AG04450 (cell line): ENCODE measurements at regions of chr3 and their contacts with region 1.

Region 1: DNA sequence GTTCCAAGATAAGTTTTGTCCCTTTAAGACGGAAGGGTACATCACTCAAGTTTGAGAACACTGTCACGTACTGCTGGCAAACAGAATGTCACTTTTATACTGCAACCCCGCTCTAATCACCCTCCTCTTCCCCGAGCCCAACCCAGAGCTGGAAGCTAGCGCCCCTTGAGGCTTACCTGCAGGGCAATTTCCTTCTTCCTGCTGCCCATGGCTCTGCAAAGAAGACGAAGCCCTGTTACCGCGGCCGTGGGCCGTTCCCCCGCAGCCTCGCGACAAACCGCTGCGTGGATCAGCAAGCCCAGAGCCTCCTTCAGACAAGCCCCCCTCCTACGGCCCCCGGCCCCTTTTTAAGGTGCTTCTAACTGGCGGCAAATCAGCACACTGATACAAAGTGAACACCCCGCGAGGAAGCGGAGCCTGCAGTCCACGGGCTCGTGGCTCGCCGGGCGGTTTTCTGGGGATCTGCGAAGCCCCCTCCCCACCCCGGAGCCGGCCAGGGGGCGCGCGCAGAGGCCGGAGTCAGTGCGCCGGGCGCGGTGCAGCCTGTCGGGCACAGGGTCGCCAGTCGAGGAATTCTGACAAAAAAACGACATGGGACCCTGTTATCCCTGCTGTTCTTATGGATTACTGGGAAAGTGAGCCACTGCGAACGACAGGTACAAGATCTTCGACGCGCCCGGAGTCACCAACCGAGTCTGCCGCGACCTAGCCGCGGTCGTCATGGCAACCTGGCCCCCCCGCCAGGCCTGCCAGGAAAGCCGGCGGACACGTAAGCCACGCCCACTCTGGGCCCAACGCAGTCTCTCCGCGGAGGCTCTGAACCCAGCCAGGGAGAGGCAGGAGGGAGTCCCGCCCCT is at the start of gene NME9:
- DNase-seq: peak; percentile 55
- H3K4me3 ChIP-seq: peak within 1 kb of the TSS; percentile 68
- H3K27ac ChIP-seq: no peak within 1 kb of the TSS
- H3K27me3 ChIP-seq: peaks cover 5% of the 10 kb centered on the region
- CTCF ChIP-seq: peak; percentile 79
- polyA plus RNA-seq, gene NME9: 0.19 TPM in 1 of 2 replicates, not detected in the other

Region 2: DNA sequence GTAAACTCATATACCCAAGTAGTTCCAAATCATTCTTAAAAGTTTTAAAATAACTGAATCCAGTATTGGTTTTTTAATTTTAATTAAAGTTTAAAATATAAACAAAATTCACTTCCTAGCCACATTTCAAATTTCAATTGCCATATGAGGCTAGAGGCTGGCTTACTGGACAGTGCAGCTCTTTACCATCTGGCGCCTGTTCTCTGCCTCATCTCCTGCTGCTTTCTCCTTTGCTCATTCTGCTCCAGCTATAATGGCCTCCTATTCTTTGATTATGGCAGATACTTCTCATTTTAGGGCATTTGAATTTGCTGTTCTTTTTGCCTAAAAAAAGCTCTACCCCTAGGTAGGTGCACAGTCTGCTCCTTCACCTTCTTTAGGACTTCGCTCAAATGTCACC is 123.2 kb before region 1 on chr3:
- CTCF ChIA-PET with region 1: no interaction called
- POLR2A ChIA-PET with region 1: no interaction called
- DNase-seq: no peak
- H3K4me3 ChIP-seq: no peak overlapping the region
- H3K27ac ChIP-seq: no peak overlapping the region
- H3K27me3 ChIP-seq: no peaks in the 10 kb centered on the region
- CTCF ChIP-seq: no peak

Region 3: GRCh38 chr3:138347960-138348753 is 18.8 kb after region 1 on chr3 and contains the start of gene MRAS:
- CTCF ChIA-PET with region 1: interaction called, 36 read pairs
- POLR2A ChIA-PET with region 1: no interaction called
- DNase-seq: peak; percentile 43
- H3K4me3 ChIP-seq: peak within 1 kb of the TSS; percentile 82
- H3K27ac ChIP-seq: peak within 1 kb of the TSS; percentile 70
- H3K27me3 ChIP-seq: no peaks in the 10 kb centered on the region
- CTCF ChIP-seq: peak; percentile 47
- polyA plus RNA-seq, gene MRAS: 58.3 and 59.1 TPM in 2 replicates

Region 4: GRCh38 chr3:138426226-138426625 is 96.9 kb after region 1 on chr3:
- CTCF ChIA-PET with region 1: interaction called, 23 read pairs
- POLR2A ChIA-PET with region 1: no interaction called
- DNase-seq: no peak
- H3K4me3 ChIP-seq: no peak overlapping the region
- H3K27ac ChIP-seq: no peak overlapping the region
- H3K27me3 ChIP-seq: peaks cover 6% of the 10 kb centered on the region
- CTCF ChIP-seq: peak; percentile 67

Region 5: GRCh38 chr3:138442433-138442832 is 113.1 kb after region 1 on chr3:
- CTCF ChIA-PET with region 1: no interaction called
- POLR2A ChIA-PET with region 1: no interaction called
- DNase-seq: no peak
- H3K4me3 ChIP-seq: no peak overlapping the region
- H3K27ac ChIP-seq: no peak overlapping the region
- H3K27me3 ChIP-seq: peaks cover 19% of the 10 kb centered on the region
- CTCF ChIP-seq: no peak

Region 6: DNA sequence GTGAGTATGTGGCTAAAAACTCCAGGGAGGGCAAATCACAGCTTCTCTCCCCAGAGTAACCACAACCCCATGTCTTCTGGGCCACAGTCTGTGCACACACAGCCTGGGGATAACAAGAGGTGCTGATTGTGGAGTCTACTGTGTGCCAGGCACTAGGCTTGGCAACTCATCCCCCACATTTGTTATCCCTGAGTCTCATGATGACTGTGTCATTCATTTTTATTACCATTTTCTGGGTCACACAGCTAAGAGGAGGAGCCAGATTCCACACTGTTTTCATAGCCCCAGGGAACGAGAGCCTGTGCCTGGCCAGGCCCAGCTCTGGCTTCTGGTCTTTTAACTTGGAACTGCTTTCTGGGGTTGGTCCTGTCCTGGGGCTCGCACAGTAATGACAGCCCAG is 139.5 kb after region 1 on chr3:
- CTCF ChIA-PET with region 1: no interaction called
- POLR2A ChIA-PET with region 1: no interaction called
- DNase-seq: no peak
- H3K4me3 ChIP-seq: no peak overlapping the region
- H3K27ac ChIP-seq: no peak overlapping the region
- H3K27me3 ChIP-seq: peaks cover 16% of the 10 kb centered on the region
- CTCF ChIP-seq: no peak